SK-N-SH (cell line): ENCODE measurements at regions of chr5 and their contacts with region 1.

Region 1: GRCh38 chr5:78359831-78360673 is at the start of gene SCAMP1:
- DNase-seq: peak; percentile 97
- H3K4me3 ChIP-seq: peak within 1 kb of the TSS; percentile 89 to 96
- H3K27ac ChIP-seq: peak within 1 kb of the TSS; percentile 96 to 98
- H3K4me1 ChIP-seq: peaks cover 0 to 14% of the 10 kb centered on the region in 2 experiments; a peak in 2 of 4 replicates
- H3K27me3 ChIP-seq: no peaks in the 10 kb centered on the region
- CTCF ChIP-seq: no peak; the same call in 1 of the 2 replicates
- EP300 ChIP-seq: 0 out of 4 replicates have a peak, but pooled peaks of 1 of the 2 experiments have one; percentile 12
- RAD21 ChIP-seq: no peak; the same call in 1 of the 2 replicates
- polyA plus RNA-seq, gene SCAMP1: 11.5 and 18.2 TPM in 2 replicates

Region 2: GRCh38 chr5:78113689-78114264 is 246.3 kb before region 1 on chr5:
- CTCF ChIA-PET with region 1: no interaction called
- POLR2A ChIA-PET with region 1: no interaction called
- DNase-seq: peak; percentile 9
- H3K4me3 ChIP-seq: no peak overlapping the region
- H3K27ac ChIP-seq: no peak overlapping the region
- H3K4me1 ChIP-seq: peaks cover 0 to 5% of the 10 kb centered on the region in 2 experiments; a peak in 2 of 4 replicates
- H3K27me3 ChIP-seq: no peaks in the 10 kb centered on the region
- CTCF ChIP-seq: no peak
- EP300 ChIP-seq: no peak; a peak in 1 of 4 replicates
- RAD21 ChIP-seq: no peak

Region 3: GRCh38 chr5:78235289-78235688 is 124.8 kb before region 1 on chr5:
- CTCF ChIA-PET with region 1: no interaction called
- POLR2A ChIA-PET with region 1: no interaction called
- DNase-seq: no peak
- H3K4me3 ChIP-seq: no peak overlapping the region
- H3K27ac ChIP-seq: no peak overlapping the region
- H3K4me1 ChIP-seq: no peaks in the 10 kb centered on the region; a peak in 1 of 4 replicates
- H3K27me3 ChIP-seq: no peaks in the 10 kb centered on the region
- CTCF ChIP-seq: no peak
- EP300 ChIP-seq: no peak
- RAD21 ChIP-seq: no peak

Region 4: GRCh38 chr5:78294248-78295034 is 65.6 kb before region 1 on chr5 and contains the start of gene AP3B1:
- CTCF ChIA-PET with region 1: interaction called, 8 read pairs
- POLR2A ChIA-PET with region 1: interaction called, 29 read pairs
- DNase-seq: peak; percentile 96
- H3K4me3 ChIP-seq: peak within 1 kb of the TSS; percentile 85 to 97
- H3K27ac ChIP-seq: peak within 1 kb of the TSS; percentile 86 to 87
- H3K4me1 ChIP-seq: peaks cover 4 to 6% of the 10 kb centered on the region in 2 experiments; a peak in 3 of 4 replicates
- H3K27me3 ChIP-seq: no peaks in the 10 kb centered on the region
- CTCF ChIP-seq: no peak
- EP300 ChIP-seq: no peak
- RAD21 ChIP-seq: 0 out of 2 replicates have a peak, but pooled peaks have one; percentile 1
- polyA plus RNA-seq, gene AP3B1: 18.0 and 27.3 TPM in 2 replicates

Region 5: GRCh38 chr5:78550891-78551290 is 190.8 kb after region 1 on chr5:
- CTCF ChIA-PET with region 1: no interaction called
- POLR2A ChIA-PET with region 1: no interaction called
- DNase-seq: no peak
- H3K4me3 ChIP-seq: no peak overlapping the region
- H3K27ac ChIP-seq: peak overlapping the region in 1 of 2 experiments; percentile 56; a peak in 2 of 4 replicates
- H3K4me1 ChIP-seq: peaks cover 18 to 24% of the 10 kb centered on the region in 2 experiments
- H3K27me3 ChIP-seq: no peaks in the 10 kb centered on the region
- CTCF ChIP-seq: no peak
- EP300 ChIP-seq: no peak
- RAD21 ChIP-seq: no peak